ENCODE measurements at regions of chr13 and their contacts with region 1.

Region 1: GRCh38 chr13:27270594-27271520 is at the start of gene RASL11A:
- DNase-seq: peak; percentile 44 to 95
- H3K4me3 ChIP-seq: peak within 1 kb of the TSS; percentile 67 to 84
- H3K27ac ChIP-seq: peak within 1 kb of the TSS; percentile 91 to 93
- H3K4me1 ChIP-seq: peaks cover 4 to 30% of the 10 kb centered on the region in 2 donors
- H3K27me3 ChIP-seq: no peaks in the 10 kb centered on the region
- CTCF ChIP-seq: peak; percentile 91 to 98 (median 94)
- total RNA-seq, gene RASL11A: 50.4 TPM

Region 2: GRCh38 chr13:27171827-27172494 is 98.9 kb before region 1 on chr13:
- intact Hi-C with region 1: loop called (anchors 1 kb)
- DNase-seq: peak; percentile 66 to 97
- H3K4me3 ChIP-seq: peak overlapping the region; percentile 86 to 90
- H3K27ac ChIP-seq: peak overlapping the region; percentile 89 to 99
- H3K4me1 ChIP-seq: peaks cover 9 to 22% of the 10 kb centered on the region in 2 donors
- H3K27me3 ChIP-seq: no peaks in the 10 kb centered on the region
- CTCF ChIP-seq: peak in 1 of 3 experiments; percentile 22

Region 3: DNA sequence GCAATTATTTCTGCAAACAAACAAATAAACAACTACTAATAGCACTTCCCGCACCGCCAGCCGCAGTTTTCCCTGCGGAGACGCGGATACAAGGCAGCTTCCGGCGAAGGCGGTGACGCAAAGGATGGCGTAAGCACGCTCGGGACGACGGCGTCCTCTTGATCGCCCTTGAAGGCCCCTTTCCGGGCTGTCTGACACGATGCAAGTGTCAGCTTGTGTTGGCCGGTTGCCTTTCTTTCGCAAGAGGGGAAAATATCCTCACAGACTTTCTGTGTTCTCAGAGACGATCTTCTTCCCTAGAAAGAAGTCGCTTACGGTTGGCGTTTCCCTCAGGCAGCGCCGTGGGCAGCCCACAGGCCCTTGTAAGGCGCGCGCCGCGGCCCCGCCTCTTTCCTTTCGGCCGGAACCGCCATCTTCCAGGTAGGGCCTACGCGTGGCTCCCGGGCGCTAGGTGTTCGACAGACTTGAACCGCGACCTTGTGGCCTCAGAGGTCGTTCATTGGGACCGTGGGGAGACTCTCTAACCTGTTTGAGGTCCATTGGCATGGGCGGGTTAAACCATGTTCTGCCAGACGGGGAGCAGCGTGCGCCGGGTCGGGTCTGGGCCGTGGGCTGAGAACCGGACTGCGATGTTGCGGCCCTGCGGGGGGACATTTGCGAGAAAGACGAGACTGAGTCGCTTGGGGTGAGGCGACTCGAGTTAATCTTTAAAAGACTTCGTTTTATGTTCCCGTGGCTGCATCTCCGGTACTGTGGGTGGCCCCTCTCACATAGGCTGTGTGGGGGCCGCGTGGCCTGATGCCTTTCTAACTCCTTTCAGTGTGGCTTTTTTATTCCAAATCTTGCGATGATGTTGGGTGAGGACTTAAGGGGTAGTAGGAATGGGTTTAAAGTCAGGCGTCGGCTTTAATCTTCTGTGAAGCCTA is 19.4 kb before region 1 on chr13 and contains the start of gene RPL21:
- intact Hi-C with region 1: loop called (anchors 1 kb)
- DNase-seq: peak; percentile 81 to 98
- H3K4me3 ChIP-seq: peak within 1 kb of the TSS; percentile 82 to 93
- H3K27ac ChIP-seq: peak within 1 kb of the TSS; percentile 91 to 97
- H3K4me1 ChIP-seq: peaks cover 5 to 17% of the 10 kb centered on the region in 2 donors
- H3K27me3 ChIP-seq: no peaks in the 10 kb centered on the region
- CTCF ChIP-seq: no peak
- total RNA-seq, gene RPL21: 377 TPM

Region 4: DNA sequence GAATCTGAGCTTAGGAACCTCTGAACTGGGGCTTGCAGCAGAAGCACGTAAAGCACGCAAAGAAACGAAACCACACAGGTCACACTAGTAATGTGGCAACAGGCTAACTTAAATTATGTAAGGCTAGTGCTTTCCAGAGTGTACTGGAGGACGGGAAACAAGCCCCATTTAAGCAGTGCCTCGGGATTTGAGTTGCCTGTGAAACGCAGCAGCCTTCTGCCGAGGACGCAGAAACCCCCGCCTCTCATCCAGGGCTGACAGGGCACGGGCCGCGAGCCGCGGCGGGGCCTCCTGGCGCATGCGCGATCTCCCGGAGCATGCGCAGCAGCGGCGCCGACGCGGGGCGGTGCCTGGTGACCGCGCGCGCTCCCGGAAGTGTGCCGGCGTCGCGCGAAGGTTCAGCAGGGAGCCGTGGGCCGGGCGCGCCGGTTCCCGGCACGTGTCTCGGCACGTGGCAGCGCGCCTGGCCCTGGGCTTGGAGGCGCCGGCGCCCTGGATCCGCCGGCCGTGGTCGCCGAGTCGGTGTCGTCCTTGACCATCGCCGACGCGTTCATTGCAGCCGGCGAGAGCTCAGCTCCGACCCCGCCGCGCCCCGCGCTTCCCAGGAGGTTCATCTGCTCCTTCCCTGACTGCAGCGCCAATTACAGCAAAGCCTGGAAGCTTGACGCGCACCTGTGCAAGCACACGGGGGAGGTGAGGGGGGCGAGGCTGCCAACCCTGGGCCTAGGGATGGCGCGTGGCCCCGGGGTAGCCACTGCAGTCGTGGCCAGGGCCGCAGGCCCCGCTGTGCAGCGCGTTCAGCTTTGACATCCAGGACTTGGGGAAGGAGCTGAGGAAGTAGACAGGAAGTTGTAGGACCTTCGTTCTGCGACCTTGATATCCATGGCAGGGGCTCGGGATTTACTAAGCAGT is 153.6 kb after region 1 on chr13 and contains the start of gene GTF3A:
- intact Hi-C with region 1: loop called (anchors 5 kb)
- DNase-seq: peak; percentile 37 to 87
- H3K4me3 ChIP-seq: peak within 1 kb of the TSS; percentile 82 to 94
- H3K27ac ChIP-seq: peak within 1 kb of the TSS; percentile 84 to 87
- H3K4me1 ChIP-seq: peaks cover 9 to 22% of the 10 kb centered on the region in 2 donors
- H3K27me3 ChIP-seq: no peaks in the 10 kb centered on the region
- CTCF ChIP-seq: no peak
- total RNA-seq, gene GTF3A: 197 TPM

Region 5: DNA sequence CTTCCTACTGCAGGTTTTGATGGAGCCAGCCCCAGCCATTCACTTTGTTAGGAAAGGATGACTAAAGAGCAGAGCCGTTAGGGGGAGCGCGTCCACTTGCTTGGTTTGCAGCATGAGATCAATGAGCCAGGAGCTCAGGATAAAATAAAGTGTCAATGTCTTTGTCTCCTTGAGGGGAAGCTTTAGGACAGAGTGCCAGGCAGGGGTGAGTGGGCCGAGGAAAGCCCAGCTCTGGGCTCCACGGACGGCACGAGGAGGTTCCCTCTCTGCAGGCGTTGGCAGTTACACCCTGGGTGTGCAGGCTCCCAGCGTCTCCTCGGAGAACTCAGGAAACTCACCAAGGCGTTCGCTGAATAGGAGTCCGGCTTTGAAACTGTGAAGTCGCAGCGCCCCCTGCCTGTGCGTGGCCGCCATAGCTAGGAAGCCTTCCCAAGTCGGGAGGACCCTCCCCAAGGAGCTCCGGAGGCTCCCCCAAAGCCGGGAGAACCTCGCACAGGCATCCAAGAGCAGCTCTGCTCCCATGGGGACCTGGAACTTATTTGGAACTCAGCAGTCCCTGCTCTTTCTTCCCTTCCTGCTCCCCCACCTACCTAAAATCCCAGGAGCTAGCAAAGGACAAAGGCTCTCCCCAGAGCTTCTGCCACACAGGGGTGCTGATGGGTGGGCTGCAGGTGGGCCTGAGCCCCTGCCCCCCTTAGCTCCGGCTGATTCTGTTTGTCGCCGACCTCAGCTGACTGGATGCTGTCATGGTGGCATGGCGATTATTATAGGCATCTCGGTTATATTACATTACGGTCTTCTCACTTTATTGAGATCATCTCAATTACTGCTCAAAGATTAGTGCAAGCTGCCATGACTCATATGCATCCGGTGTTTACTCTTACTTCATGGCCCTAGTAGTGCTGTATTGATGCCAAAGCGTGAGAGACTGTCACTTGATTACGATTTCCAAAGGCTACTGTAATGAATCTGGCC is 555.8 kb after region 1 on chr13:
- intact Hi-C with region 1: no loop called
- DNase-seq: peak in 1 of 2 donors; percentile 87
- H3K4me3 ChIP-seq: peak overlapping the region in 1 of 2 donors; percentile 51
- H3K27ac ChIP-seq: no peak overlapping the region
- H3K4me1 ChIP-seq: peaks cover 0 to 5% of the 10 kb centered on the region in 2 donors
- H3K27me3 ChIP-seq: no peaks in the 10 kb centered on the region
- CTCF ChIP-seq: peak; percentile 77 to 92 (median 87)

Region 6: DNA sequence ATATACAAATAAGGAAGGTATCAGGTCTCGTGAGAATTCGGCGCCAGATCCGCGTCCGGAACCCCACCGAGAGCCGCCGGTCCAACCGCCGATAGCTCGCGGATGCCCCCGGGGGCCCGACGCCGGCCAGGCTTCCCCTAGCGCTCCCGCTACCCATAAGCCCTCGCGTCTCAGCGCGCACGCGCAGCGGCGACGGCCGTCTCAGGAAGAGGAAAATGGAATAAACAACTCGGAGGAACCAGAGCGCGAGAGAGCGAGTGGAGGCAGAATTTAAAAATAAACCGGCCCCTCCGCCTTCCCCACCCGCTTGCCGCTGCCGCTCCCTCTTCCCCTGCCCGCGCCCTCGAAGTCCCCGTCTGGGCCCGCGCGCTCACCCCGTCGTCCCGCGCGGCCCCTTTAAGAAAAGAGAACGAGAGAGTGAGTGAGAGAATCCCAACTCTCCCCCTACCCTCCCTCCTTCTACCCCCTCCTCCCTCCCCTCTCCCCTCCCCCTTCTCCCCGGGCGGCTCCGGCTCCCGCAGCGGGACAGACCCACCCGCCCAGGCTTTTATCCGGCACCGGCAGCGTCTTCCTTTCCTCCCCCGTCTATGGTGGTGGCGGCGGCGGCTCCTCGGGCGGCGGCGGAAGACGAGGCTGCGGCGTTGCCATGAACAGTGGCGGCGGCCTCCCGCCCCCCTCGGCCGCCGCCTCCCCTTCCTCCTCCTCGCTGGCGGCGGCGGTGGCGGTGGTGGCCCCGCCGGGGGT is 867.3 kb after region 1 on chr13 and contains the start of gene PAN3:
- intact Hi-C with region 1: loop called (anchors 10 kb)
- DNase-seq: peak; percentile 72 to 96
- H3K4me3 ChIP-seq: peak within 1 kb of the TSS; percentile 81 to 95
- H3K27ac ChIP-seq: peak within 1 kb of the TSS; percentile 90 to 100
- H3K4me1 ChIP-seq: peaks cover 0 to 16% of the 10 kb centered on the region in 2 donors
- H3K27me3 ChIP-seq: no peaks in the 10 kb centered on the region
- CTCF ChIP-seq: peak in 1 of 3 experiments; percentile 10
- total RNA-seq, gene PAN3: 34.5 TPM